Endothelial cell of umbilical vein (primary cell): ENCODE measurements at regions of chr2 and their contacts with region 1.

Region 1: DNA sequence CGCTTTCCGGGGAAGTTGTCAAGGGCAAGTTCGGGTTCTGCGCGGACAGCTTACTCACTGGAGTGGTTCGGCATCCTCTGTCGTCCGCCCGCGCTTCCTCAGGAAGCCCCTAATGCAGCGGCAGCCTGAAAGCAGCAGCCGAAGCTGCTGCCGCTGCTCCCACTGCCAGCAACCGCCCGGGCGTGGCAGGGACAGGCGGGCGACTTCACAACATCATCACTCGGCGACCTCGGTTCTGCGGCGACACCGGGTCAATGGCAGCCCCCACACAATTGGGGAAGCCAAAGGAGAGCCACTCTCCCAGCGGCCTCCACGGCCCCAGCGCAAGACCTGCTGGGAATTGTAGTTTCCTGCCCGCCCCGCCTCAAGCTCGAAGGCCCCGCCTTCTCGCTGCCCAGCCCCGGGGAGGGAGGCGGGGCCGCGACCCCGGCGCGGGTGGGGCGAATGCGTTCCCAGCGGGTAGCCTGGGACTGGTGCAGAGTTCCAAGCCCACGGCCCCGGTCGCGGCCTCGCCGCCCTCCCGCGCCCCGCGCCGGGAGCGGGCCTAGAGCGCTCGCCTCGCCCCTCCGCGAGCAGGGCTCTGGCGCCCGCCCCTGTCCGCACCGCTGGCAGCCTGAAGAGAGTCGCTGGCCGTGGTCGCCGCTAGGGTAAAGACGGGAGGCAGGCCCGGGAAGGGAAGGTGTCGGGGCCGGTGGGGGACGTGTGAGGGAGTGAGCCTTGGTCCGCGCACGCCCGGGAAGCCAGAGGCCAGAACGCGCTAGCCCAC is at the starts of genes STRADB and TRAK2:
- DNase-seq: peak; percentile 95
- H3K4me3 ChIP-seq: peak within 1 kb of the TSS; percentile 86 to 91 (median 90)
- H3K27ac ChIP-seq: peak within 1 kb of the TSS; percentile 62
- H3K4me1 ChIP-seq: peaks cover 7% of the 10 kb centered on the region
- H3K27me3 ChIP-seq: no peaks in the 10 kb centered on the region
- CTCF ChIP-seq: peak in 1 of 2 donors; percentile 47
- POLR2A ChIP-seq: peak; percentile 85
- total RNA-seq, gene STRADB: 16.6 and 16.8 TPM in 2 replicates
- total RNA-seq, gene TRAK2: 35.7 and 38.5 TPM in 2 replicates

Region 2: DNA sequence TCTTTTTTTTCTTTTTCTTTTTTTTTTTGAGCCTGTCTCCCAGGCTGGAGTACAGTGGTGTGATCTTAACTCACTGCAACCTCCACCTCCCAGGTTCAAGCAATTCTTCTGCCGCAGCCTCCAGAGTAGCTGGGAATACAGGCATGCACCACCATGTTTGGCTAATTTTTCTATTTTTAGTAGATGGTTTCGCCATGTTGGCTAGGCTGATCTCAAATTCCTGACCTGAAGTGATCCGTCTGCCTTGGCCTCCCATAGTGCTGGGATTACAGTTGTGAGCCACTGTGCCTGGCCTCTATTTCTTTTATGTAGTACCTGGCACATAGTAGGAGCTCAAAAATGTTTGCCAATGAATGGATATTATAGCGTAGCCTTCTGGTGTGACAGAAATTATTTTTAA is 342.3 kb before region 1 on chr2:
- CTCF ChIA-PET with region 1: no interaction called
- POLR2A ChIA-PET with region 1: no interaction called
- dilution Hi-C with region 1: no loop called
- intact Hi-C with region 1: no loop called
- DNase-seq: no peak
- H3K4me3 ChIP-seq: no peak overlapping the region
- H3K27ac ChIP-seq: no peak overlapping the region
- H3K4me1 ChIP-seq: no peaks in the 10 kb centered on the region
- H3K27me3 ChIP-seq: no peaks in the 10 kb centered on the region
- CTCF ChIP-seq: no peak
- POLR2A ChIP-seq: no peak

Region 3: GRCh38 chr2:201257956-201258665 is 193.4 kb before region 1 on chr2:
- CTCF ChIA-PET with region 1: no interaction called
- POLR2A ChIA-PET with region 1: no interaction called
- dilution Hi-C with region 1: no loop called
- intact Hi-C with region 1: loop called (anchors 2 kb)
- DNase-seq: peak; percentile 84
- H3K4me3 ChIP-seq: peak overlapping the region; percentile 43 to 80 (median 78)
- H3K27ac ChIP-seq: peak overlapping the region; percentile 98
- H3K4me1 ChIP-seq: peaks cover 30% of the 10 kb centered on the region
- H3K27me3 ChIP-seq: no peaks in the 10 kb centered on the region
- CTCF ChIP-seq: no peak
- POLR2A ChIP-seq: peak; percentile 31

Region 4: DNA sequence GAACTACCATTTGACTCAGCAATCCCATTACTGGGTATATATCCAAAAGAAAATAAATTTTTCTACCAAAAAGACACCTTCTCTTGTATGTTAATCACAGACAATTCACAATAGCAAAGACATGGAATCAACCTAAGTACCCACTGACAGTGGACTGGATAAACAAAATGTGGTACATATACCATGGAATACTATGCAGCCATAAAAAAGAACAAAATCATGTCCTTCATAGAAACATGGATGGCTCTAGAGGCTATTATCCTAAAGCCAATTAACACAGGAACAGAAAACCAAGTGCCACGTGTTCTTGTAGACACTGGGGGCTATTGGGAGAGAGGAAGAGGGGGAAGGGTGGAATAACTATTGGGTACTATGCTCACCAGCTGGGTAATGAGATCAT is 122.1 kb before region 1 on chr2:
- CTCF ChIA-PET with region 1: no interaction called
- POLR2A ChIA-PET with region 1: no interaction called
- dilution Hi-C with region 1: no loop called
- intact Hi-C with region 1: no loop called
- DNase-seq: no peak
- H3K4me3 ChIP-seq: no peak overlapping the region
- H3K27ac ChIP-seq: no peak overlapping the region
- H3K4me1 ChIP-seq: no peaks in the 10 kb centered on the region
- H3K27me3 ChIP-seq: no peaks in the 10 kb centered on the region
- CTCF ChIP-seq: no peak
- POLR2A ChIP-seq: no peak

Region 5: DNA sequence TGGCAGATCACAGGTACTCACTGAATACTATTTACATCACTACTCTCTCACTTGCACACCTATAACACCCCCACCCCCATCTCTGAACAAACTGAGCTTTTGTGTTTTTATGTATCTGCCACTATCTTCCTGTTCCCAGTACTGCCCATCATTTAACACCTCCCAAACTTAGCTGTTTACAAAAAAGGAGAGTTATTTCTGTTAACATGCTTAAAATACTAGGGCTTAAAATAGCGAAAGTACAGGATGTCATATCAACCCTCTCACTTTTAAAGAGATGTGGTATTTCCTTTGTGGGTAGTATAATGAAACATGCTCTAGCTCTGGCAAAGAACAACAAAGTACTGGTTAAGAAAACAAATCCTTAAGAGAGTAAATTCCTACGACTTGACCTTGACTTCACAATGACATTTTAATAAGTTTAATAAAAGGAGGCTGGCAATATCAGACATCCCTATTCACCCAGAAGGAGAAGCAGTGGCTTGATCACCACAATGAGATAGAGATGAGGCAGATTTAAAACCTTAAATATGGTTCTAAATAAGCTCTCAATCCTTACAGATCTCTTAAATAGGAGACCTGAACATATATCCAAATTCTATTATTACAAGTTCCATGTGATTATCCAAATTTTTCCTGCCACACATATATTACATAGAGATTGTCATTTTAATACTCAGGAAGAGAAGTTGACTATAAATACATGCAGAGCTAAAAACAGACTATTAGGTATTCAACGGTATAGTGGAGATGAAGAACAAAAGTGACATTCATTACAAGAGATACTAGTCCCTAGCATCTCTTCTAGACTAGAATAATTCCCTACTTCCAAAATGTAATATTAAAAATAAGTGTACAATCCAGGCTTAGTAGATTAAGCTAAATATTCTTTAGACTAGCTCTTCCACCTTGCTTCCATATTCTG is 37.1 kb before region 1 on chr2:
- CTCF ChIA-PET with region 1: interaction called, 5 read pairs
- POLR2A ChIA-PET with region 1: no interaction called
- dilution Hi-C with region 1: no loop called
- intact Hi-C with region 1: loop called (anchors 1 kb)
- DNase-seq: peak; percentile 80
- H3K4me3 ChIP-seq: peak overlapping the region in 1 of 3 experiments; percentile 45
- H3K27ac ChIP-seq: peak overlapping the region; percentile 70
- H3K4me1 ChIP-seq: peaks cover 37% of the 10 kb centered on the region
- H3K27me3 ChIP-seq: no peaks in the 10 kb centered on the region
- CTCF ChIP-seq: no peak
- POLR2A ChIP-seq: no peak

Region 6: GRCh38 chr2:201432038-201432620 is 19.3 kb before region 1 on chr2:
- CTCF ChIA-PET with region 1: interaction called, 4 read pairs
- POLR2A ChIA-PET with region 1: no interaction called
- dilution Hi-C with region 1: no loop called
- intact Hi-C with region 1: loop called (anchors 1 kb)
- DNase-seq: peak; percentile 74
- H3K4me3 ChIP-seq: no peak overlapping the region
- H3K27ac ChIP-seq: peak overlapping the region; percentile 12
- H3K4me1 ChIP-seq: peaks cover 24% of the 10 kb centered on the region
- H3K27me3 ChIP-seq: no peaks in the 10 kb centered on the region
- CTCF ChIP-seq: no peak
- POLR2A ChIP-seq: no peak

Region 7: GRCh38 chr2:201484805-201485204 is 33.3 kb after region 1 on chr2:
- CTCF ChIA-PET with region 1: no interaction called
- POLR2A ChIA-PET with region 1: no interaction called
- dilution Hi-C with region 1: no loop called
- intact Hi-C with region 1: no loop called
- DNase-seq: no peak
- H3K4me3 ChIP-seq: no peak overlapping the region
- H3K27ac ChIP-seq: no peak overlapping the region
- H3K4me1 ChIP-seq: no peaks in the 10 kb centered on the region
- H3K27me3 ChIP-seq: no peaks in the 10 kb centered on the region
- CTCF ChIP-seq: no peak
- POLR2A ChIP-seq: no peak

Region 8: GRCh38 chr2:201621293-201621999 is 170.0 kb after region 1 on chr2:
- CTCF ChIA-PET with region 1: interaction called, 4 read pairs
- POLR2A ChIA-PET with region 1: no interaction called
- dilution Hi-C with region 1: no loop called
- intact Hi-C with region 1: loop called (anchors 1 kb)
- DNase-seq: peak; percentile 89
- H3K4me3 ChIP-seq: peak overlapping the region in 1 of 3 experiments; percentile 20
- H3K27ac ChIP-seq: peak overlapping the region; percentile 74
- H3K4me1 ChIP-seq: peaks cover 26% of the 10 kb centered on the region
- H3K27me3 ChIP-seq: no peaks in the 10 kb centered on the region
- CTCF ChIP-seq: no peak
- POLR2A ChIP-seq: peak; percentile 61

Region 9: DNA sequence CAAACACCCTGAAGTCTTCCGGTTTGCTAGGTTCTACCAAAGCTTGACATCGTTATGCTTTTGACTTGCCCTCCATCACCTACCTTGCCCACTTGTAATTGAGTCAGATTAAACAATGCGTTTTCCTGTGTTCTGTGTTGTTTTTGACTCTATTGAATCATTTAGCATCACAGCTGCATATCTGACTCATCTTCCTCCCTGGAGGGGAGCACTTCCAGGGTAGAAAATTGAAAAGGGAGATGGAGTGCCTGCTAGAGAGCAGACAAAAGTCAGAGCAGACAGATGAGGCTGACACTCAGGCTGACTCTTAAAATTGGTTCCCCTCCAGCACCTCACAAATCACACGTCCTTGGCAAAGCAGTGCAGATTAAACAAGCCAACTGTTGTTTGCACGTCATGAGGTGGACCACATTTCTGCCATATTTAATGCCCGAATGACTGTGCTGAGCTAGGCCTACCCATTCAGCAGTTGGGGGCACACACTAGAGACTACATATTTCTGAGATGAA is 244.7 kb after region 1 on chr2:
- CTCF ChIA-PET with region 1: no interaction called
- POLR2A ChIA-PET with region 1: no interaction called
- dilution Hi-C with region 1: no loop called
- intact Hi-C with region 1: loop called (anchors 2 kb)
- DNase-seq: peak; percentile 95
- H3K4me3 ChIP-seq: no peak overlapping the region
- H3K27ac ChIP-seq: peak overlapping the region; percentile 96
- H3K4me1 ChIP-seq: peaks cover 61% of the 10 kb centered on the region
- H3K27me3 ChIP-seq: no peaks in the 10 kb centered on the region
- CTCF ChIP-seq: no peak
- POLR2A ChIP-seq: peak; percentile 43

Region 10: DNA sequence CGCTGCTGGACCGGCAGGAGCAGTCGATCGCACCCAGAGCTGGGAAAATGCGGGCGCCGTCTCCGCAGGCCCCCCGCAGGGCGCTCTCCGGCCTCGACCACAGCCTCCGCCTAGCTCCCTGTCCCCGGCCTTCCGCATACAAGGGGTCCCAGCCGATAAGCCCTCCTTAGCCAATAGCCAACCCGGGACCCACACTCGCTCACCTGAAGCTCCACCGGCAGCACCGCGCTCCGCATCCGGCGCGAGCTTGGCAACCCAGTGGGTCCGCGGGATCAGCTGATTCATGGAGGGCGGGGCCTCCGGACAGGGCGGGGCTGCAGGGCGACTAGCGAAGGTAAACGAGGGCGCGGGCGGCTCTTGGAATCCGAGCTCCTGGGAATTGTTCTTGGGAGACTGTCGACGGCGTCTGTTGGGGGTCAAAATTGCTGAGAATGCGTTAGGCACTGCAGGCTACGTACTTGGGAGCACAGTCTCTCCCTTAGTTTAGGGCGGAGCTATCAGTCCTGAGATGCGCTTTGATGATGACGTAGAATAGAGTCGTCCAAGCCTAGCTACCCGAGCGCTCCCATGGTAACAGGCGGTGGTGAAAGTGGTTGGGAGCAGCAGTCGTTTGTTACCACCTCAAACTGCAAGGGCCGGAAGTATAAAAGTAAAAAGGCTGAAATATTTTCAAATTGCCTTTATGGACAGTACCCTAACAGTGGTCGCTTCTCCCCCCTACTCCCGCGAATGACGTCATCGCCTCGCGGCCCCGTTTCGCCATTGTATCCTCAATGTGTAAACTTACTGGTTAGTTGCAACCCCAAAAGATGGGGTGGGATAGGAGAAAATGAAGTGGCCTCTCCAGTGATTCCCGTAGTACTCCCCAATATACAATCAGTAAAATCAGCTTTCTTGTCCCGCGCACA is 329.5 kb after region 1 on chr2 and contains the start of gene ALS2:
- CTCF ChIA-PET with region 1: no interaction called
- POLR2A ChIA-PET with region 1: no interaction called
- dilution Hi-C with region 1: no loop called
- intact Hi-C with region 1: loop called (anchors 2 kb)
- DNase-seq: peak; percentile 99
- H3K4me3 ChIP-seq: peak within 1 kb of the TSS; percentile 49 to 90 (median 79)
- H3K27ac ChIP-seq: peak within 1 kb of the TSS; percentile 14
- H3K4me1 ChIP-seq: peaks cover 32% of the 10 kb centered on the region
- H3K27me3 ChIP-seq: peaks cover 0 to 10% of the 10 kb centered on the region in 2 experiments
- CTCF ChIP-seq: no peak
- POLR2A ChIP-seq: peak; percentile 89
- total RNA-seq, gene ALS2: 34.6 and 36.1 TPM in 2 replicates